Right ventricle myocardium inferior (tissue), 1 donor: ENCODE measurements at regions of chr6 and their contacts with region 1.

Region 1: DNA sequence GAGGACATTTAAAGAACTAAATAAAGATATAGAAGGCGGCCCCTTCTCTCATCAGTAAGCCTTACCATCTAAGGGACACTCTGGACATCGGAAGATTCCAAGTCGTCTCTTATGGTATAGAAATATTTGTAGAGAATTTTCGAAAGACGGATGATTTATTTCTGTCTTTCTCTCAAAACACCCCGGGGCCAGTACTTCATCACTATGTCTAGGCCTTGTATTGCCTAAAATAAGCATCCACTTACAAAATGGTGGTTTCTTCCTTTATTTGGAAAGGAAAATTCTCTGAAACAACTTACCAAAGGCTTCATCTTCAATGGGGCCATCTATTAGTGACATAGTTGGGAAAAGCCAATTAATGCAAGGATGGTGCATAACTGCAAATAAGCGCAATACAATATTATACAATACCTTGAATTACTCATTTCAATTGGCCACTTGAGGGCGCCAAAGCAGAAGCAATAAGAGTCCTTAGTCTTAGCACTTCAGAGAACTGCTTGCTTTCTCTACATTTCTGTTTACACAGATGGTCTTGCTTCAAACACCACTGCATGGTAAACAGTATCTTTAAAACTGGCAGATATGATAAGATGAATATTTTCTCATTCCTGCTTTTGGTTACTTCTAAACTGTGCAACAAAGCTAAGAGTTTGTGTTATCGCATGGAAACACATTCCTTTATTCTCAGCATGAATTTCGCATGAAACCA is 113.2 kb downstream of the VIP start:
- DNase-seq: no peak
- ATAC-seq: peak; percentile 76

Region 2: DNA sequence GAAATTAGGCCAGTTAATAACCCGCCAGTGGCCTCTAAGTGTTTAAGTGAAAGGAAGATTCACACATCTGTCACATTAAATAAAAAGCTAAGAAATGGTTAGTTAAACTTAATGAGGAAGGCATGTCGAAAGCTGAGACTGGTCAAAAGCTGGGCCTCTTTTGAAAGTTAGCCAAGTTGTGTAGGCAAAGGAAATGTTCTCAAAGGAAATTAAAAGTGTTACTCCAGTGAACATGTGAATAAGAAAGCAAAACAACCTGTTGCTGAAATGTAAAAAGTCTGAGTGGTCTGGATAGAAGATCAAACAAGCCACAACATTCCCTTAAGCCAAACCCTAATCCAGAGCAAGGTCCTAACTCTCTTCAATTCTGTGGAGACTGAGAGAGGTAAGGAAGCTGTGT is 149.7 kb after region 1 on chr6:
- intact Hi-C with region 1: no loop called
- DNase-seq: no peak
- ATAC-seq: no peak

Region 3: GRCh38 chr6:153023977-153024708 is 160.4 kb after region 1 on chr6:
- intact Hi-C with region 1: loop called (anchors 2 kb)
- DNase-seq: no peak
- ATAC-seq: peak; percentile 64